Left cardiac atrium (tissue), 4 donors: ENCODE measurements at regions of chr16 and their contacts with region 1.

Region 1: GRCh38 chr16:72099377-72099818 is 5.8 kb downstream of the DHX38 start:
- DNase-seq: no peak
- ATAC-seq: peak; percentile 78 to 86

Region 2: DNA sequence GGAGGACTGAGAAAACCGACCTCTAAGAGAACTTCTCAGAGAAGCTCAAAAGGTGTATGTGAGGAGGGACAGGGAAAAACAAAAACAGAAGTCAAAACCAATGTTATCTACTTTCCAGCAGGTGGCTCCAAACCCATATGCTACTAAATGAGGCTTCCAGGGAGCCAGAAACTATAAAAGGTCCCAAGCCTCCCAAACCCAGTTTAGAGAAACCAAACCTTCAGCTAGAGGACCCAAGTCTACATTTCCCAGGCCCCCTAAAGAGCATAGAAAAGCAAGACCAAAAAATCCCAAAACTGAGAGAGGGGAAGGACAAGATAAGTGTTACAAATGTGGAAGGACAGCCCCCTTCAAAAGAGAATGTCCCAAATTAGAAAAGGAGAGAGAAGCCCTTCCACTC is 32.7 kb before region 1 on chr16:
- intact Hi-C with region 1: loop called in 1 of 2 experiments (anchors 2 kb)
- DNase-seq: no peak
- ATAC-seq: peak; percentile 61 to 84

Region 3: GRCh38 chr16:72172105-72173034 is 73.0 kb after region 1 on chr16 and contains the start of gene PMFBP1:
- intact Hi-C with region 1: no loop called
- DNase-seq: peak; percentile 26
- ATAC-seq: peak; percentile 71 to 85
- total RNA-seq, gene PMFBP1: 0.32 to 0.42 TPM

Region 4: DNA sequence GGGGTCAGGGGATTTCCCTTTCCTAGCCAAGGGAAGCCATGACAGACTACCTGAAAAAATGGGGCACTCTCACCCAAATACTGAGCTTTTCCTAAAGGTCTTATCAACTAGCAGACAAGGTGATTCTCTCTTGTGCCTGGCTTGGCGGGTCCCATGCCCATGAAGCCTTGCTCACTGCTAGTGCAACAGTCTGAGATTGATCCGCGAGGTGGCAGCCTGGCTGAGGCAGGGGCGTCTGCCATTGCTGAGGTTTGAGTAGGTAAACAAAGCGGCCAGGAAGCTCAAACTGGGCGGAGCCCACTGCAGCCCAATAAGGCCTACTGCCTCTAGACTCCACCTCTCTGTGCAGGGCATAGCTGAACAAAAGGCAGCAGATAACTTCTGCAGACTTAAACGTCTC is 225.2 kb after region 1 on chr16:
- intact Hi-C with region 1: no loop called
- DNase-seq: no peak
- ATAC-seq: no peak